Common myeloid progenitor, CD34-positive (primary cell): ENCODE measurements at regions of chr6 and their contacts with region 1.

Region 1: DNA sequence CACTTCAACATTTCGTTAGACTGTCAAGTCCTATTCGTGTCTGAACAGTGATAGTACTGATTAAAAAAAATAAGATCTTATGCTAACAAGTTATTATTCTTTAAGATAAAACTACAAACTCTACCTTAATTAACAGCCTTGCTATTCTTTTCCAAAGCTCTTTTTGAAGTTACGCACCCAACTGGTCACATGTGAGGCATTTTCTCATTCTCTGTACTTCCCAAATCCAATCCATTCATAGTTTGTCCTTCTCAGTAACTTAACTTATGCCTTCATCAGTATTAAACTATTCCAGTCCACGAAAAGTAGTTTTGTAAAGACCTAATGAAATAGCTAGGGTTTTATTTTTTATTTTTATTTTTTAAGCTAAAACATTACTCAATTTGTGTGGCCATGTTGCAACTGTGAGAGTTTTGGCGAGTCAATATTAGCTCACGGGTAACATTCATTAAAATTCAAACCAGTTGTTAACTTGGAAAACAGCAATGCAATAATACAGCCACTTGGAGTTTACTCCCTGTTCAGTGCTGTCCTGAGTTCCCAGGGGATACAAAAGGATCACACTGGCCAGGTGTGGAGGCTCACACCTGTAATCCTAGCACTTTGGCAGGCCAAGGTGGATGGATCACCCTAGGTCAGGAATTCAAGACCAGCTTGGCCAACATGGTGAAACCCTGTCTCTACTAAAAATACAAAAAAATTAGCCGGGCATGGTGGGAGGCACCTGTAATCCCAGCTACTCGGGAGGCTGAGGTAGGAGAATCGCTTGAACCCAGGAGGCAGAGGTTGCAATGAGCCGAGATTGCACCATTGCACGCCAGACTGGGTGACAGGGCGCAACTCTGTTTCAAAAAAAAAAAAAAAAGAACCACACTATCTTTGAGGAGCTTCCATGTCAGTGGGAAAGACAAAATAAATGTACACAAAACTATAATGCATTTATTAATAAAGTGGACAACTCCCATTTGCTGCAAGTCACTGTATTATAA is 27.9 kb upstream of the EEF1A1 start:
- DNase-seq: peak in 1 of 3 donors; percentile 2
- H3K4me3 ChIP-seq: no peak overlapping the region
- H3K27ac ChIP-seq: no peak overlapping the region
- H3K4me1 ChIP-seq: no peaks in the 10 kb centered on the region
- H3K27me3 ChIP-seq: no peaks in the 10 kb centered on the region

Region 2: GRCh38 chr6:73200735-73201134 is 348.0 kb before region 1 on chr6:
- CTCF ChIA-PET with region 1: no interaction called
- POLR2A ChIA-PET with region 1: no interaction called
- DNase-seq: peak in 2 of 3 donors; percentile 2 to 4
- H3K4me3 ChIP-seq: no peak overlapping the region
- H3K27ac ChIP-seq: no peak overlapping the region
- H3K4me1 ChIP-seq: no peaks in the 10 kb centered on the region
- H3K27me3 ChIP-seq: no peaks in the 10 kb centered on the region

Region 3: GRCh38 chr6:73560182-73560732 is 11.5 kb after region 1 on chr6:
- CTCF ChIA-PET with region 1: interaction called, 19 read pairs
- POLR2A ChIA-PET with region 1: no interaction called
- DNase-seq: no peak
- H3K4me3 ChIP-seq: no peak overlapping the region
- H3K27ac ChIP-seq: no peak overlapping the region
- H3K4me1 ChIP-seq: no peaks in the 10 kb centered on the region
- H3K27me3 ChIP-seq: no peaks in the 10 kb centered on the region

Region 4: DNA sequence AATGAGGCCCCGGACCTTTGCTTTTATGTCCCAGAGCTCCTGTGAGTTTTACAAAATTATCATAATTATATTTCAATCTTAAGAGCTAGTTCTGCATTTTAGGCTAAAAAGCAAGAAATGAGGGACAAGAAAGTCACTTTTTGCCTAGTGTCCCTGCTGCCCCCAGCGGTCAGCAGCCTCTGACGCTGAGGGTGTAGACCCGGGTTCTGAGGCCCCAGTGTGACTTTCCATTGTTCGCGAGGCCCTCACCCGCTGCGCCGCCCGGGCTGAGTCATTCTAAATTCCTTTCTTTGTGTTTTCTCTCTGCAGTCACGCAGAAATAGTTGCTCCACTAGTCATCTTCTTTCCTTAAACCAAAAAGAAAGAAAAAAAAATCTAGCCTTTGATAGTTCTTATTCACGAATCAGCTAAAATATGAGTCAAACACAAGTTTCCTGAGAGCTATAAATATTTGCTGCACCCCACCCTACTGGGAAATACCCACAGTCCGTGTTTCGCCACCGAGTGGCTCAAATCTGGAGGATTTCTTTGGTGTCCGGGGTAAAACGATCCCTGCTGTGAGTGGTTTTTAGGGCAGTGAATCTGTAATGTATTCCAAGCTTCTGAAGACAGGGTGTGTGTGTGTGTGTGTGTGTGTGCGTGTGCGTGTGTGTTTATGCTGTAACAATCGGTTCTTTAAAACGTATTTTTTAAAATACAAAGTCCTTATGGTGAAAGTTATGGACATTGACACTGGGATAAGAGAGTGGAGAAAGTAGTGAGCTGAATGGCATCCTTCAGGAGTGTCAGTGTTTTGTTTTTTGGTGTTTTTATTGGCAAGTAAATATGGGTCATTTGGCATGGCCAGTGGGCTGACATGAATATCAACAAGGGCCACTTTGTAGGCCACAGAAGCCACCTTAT is 31.7 kb after region 1 on chr6:
- CTCF ChIA-PET with region 1: interaction called, 12 read pairs
- POLR2A ChIA-PET with region 1: no interaction called
- DNase-seq: peak; percentile 70 to 86 (median 76)
- H3K4me3 ChIP-seq: peak overlapping the region in 5 of 7 experiments; percentile 17 to 59 (median 54)
- H3K27ac ChIP-seq: peak overlapping the region; percentile 64 to 84
- H3K4me1 ChIP-seq: peaks cover 11 to 27% (median 24%) of the 10 kb centered on the region in 4 experiments
- H3K27me3 ChIP-seq: no peaks in the 10 kb centered on the region